ENCODE measurements at regions of chr10 and their contacts with region 1.

Region 1: GRCh38 chr10:102752934-102753664 is 9.4 kb downstream of the WBP1L start:
- DNase-seq: peak in 2 of 5 donors; percentile 27 to 50
- ATAC-seq: peak; percentile 68 to 83 (median 79)
- H3K4me3 ChIP-seq: no peak overlapping the region
- H3K27ac ChIP-seq: peak overlapping the region; percentile 2 to 79 (median 64)
- H3K4me1 ChIP-seq: peaks cover 0 to 55% (median 19%) of the 10 kb centered on the region in 12 donors
- H3K27me3 ChIP-seq: no peaks in the 10 kb centered on the region
- CTCF ChIP-seq: peak; percentile 45 to 75 (median 60)
- POLR2A ChIP-seq: no peak

Region 2: GRCh38 chr10:102776779-102777456 is 23.8 kb after region 1 on chr10:
- intact Hi-C with region 1: loop called in 1 of 10 experiments (anchors 2 kb)
- DNase-seq: peak; percentile 78 to 94 (median 89)
- ATAC-seq: peak; percentile 81 to 86 (median 83)
- H3K4me3 ChIP-seq: peak overlapping the region; percentile 21 to 72 (median 60)
- H3K27ac ChIP-seq: peak overlapping the region; percentile 86 to 99 (median 96)
- H3K4me1 ChIP-seq: peaks cover 11 to 100% (median 84%) of the 10 kb centered on the region in 12 donors
- H3K27me3 ChIP-seq: no peaks in the 10 kb centered on the region
- CTCF ChIP-seq: no peak
- POLR2A ChIP-seq: peak in 1 of 2 donors; percentile 54

Region 3: DNA sequence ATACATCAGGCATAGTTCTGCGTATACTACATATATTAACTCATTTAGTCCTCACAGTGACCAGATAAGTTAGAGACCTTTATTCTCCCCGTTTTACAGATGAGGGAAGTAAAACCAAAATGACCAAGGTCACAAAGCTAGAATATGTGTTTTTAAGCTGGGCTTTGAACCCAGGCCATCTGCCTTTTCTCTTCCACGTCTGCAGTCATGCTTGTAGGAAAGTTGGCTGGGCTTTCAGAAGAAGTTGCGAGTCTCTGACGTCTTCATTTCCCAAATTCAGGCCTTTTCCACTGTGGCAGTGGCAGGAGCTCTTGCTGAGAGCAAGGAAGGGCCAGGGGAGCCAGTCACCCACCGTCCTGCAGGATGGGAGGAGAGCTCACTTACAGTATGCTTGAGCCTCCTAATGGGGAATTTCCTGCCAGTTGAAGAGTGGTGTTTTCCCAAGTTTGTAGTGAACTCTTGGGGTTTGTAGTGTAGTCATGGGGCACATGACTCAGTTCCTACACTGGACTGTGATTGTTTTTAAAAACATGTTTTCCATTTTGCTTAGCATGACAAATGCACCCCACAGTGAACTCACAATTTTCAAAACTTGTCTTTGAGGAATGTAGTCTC is 49.9 kb after region 1 on chr10:
- intact Hi-C with region 1: loop called in 4 of 10 experiments (anchors 5 to 10 kb)
- DNase-seq: peak in 3 of 5 donors; percentile 54 to 65 (median 61)
- ATAC-seq: peak in 3 of 4 donors; percentile 52 to 77 (median 62)
- H3K4me3 ChIP-seq: no peak overlapping the region
- H3K27ac ChIP-seq: peak overlapping the region; percentile 19 to 93 (median 76)
- H3K4me1 ChIP-seq: peaks cover 17 to 61% (median 50%) of the 10 kb centered on the region in 12 donors
- H3K27me3 ChIP-seq: no peaks in the 10 kb centered on the region
- CTCF ChIP-seq: no peak
- POLR2A ChIP-seq: no peak

Region 4: GRCh38 chr10:102815790-102816549 is 62.9 kb after region 1 on chr10:
- intact Hi-C with region 1: loop called in 4 of 10 experiments (anchors 5 to 10 kb)
- DNase-seq: peak in 4 of 5 donors; percentile 63 to 73 (median 69)
- ATAC-seq: peak; percentile 59 to 77 (median 74)
- H3K4me3 ChIP-seq: peak overlapping the region in 4 of 12 donors; percentile 1 to 20 (median 9)
- H3K27ac ChIP-seq: peak overlapping the region; percentile 81 to 98 (median 88)
- H3K4me1 ChIP-seq: peaks cover 6 to 80% (median 42%) of the 10 kb centered on the region in 12 donors
- H3K27me3 ChIP-seq: no peaks in the 10 kb centered on the region
- CTCF ChIP-seq: no peak
- POLR2A ChIP-seq: peak in 1 of 2 donors; percentile 14

Region 5: DNA sequence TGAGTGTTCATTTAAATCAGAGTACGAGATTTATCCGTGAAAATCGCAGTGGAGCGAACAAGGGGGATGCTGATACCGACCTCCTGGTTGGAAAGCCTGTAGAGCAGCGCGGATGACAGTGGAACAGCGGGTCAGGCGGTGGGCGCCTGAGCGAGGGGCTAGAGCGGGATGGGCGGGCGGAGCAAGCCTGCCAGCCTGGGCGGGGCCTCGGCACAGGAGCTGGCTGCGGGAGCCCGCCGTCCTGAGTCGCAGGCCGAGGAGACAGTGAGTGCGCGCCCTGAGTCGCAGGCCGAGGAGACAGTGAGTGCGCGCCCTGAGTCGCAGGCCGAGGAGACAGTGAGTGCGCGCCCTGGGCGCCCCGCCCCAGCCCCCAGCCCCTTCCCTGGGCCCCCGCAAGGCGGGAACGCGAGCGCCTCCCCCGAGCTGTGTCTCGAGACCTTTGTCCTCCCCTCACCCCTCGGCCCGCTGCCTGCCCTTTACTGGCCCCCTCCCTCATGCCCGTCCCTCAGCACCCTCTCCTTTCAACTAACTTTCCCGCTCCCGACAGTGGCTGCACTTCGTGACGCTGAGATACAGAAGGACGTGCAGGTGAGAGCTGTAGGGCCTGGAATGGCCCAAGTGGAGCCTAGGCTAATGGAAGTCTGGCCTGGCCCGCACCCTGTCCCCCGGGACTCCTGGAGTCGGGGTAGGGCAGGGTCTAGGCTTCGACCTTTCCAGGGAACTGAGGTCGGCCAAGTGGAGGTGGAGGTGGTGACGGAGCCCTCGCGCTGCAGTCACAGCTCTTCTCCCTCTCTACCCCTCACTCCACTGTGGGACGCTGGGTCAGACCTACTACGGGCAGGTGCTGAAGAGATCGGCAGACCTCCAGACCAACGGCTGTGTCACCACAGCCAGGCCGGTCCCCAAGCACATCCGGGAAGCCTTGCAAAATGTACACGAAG is 116.4 kb after region 1 on chr10 and contains the start of gene AS3MT:
- intact Hi-C with region 1: no loop called
- DNase-seq: peak; percentile 19 to 69 (median 48)
- ATAC-seq: peak; percentile 52 to 92 (median 82)
- H3K4me3 ChIP-seq: peak within 1 kb of the TSS; percentile 27 to 69 (median 60)
- H3K27ac ChIP-seq: peak within 1 kb of the TSS in 10 of 12 donors; percentile 20 to 75 (median 60)
- H3K4me1 ChIP-seq: peaks cover 0 to 20% (median 8%) of the 10 kb centered on the region in 12 donors
- H3K27me3 ChIP-seq: peaks cover 0 to 10% (median 0%) of the 10 kb centered on the region in 9 donors
- CTCF ChIP-seq: no peak
- POLR2A ChIP-seq: no peak
- total RNA-seq, gene AS3MT: 8.6 to 29.0 (median 15.8) TPM

Region 6: GRCh38 chr10:103145860-103146466 is 392.9 kb after region 1 on chr10:
- intact Hi-C with region 1: no loop called
- DNase-seq: peak in 4 of 5 donors; percentile 83 to 90 (median 88)
- ATAC-seq: peak; percentile 76 to 88 (median 82)
- H3K4me3 ChIP-seq: peak overlapping the region in 8 of 12 donors; percentile 26 to 48 (median 35)
- H3K27ac ChIP-seq: peak overlapping the region; percentile 31 to 77 (median 57)
- H3K4me1 ChIP-seq: peaks cover 0 to 56% (median 28%) of the 10 kb centered on the region in 12 donors
- H3K27me3 ChIP-seq: no peaks in the 10 kb centered on the region
- CTCF ChIP-seq: no peak
- POLR2A ChIP-seq: no peak

Measured in heart left ventricle (tissue), 16 donors.